Aorta (tissue), 5 donors: ENCODE measurements at regions of chr3 and their contacts with region 1.

Region 1: GRCh38 chr3:71771126-71771525 is 13.8 kb downstream of the PROK2 start:
- DNase-seq: no peak
- ATAC-seq: no peak
- H3K4me3 ChIP-seq: no peak overlapping the region
- H3K27ac ChIP-seq: no peak overlapping the region
- H3K4me1 ChIP-seq: no peaks in the 10 kb centered on the region
- H3K27me3 ChIP-seq: peaks cover 3 to 4% of the 10 kb centered on the region in 2 donors

Region 2: DNA sequence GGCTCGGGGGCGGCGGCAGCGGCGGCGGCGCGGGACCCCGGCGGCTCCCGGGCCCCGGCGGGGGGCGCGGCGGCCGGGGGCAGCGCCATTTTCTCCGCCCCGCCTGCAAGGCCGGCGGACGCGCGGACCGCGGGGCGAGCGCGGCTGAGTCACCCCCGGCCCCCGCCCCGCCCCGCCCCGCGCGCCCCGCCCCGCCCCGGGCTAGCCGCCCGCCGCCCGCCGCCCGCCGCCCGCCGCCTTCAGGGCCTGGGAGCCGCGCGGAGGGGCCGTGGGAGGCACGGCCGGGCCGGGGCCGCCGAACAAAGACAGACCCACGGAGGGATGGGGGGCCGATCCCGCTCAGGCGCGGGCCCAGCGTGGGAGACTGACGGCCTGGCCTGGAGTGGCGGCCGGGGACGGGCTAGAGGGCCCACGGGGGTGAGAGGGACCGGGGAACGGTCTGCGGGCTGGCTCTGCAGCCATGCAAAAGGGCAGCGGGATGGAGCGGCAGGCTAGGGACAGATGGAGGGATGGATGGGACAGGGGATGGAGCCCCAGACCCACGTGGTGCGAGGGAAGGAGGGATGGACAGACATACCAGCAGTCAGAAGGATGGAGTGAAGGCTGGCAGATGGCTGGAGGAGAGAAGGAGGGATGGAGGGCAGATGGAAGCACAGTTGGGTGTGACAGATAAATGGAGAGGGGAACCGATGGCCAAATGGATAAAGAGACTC is 45.7 kb before region 1 on chr3 and contains the start of gene EIF4E3:
- intact Hi-C with region 1: no loop called
- DNase-seq: peak; percentile 52 to 81
- ATAC-seq: peak; percentile 50
- H3K4me3 ChIP-seq: peak within 1 kb of the TSS; percentile 93 to 97
- H3K27ac ChIP-seq: no peak within 1 kb of the TSS
- H3K4me1 ChIP-seq: no peaks in the 10 kb centered on the region
- H3K27me3 ChIP-seq: no peaks in the 10 kb centered on the region
- total RNA-seq, gene EIF4E3: 22.2 to 29.3 TPM

Region 3: DNA sequence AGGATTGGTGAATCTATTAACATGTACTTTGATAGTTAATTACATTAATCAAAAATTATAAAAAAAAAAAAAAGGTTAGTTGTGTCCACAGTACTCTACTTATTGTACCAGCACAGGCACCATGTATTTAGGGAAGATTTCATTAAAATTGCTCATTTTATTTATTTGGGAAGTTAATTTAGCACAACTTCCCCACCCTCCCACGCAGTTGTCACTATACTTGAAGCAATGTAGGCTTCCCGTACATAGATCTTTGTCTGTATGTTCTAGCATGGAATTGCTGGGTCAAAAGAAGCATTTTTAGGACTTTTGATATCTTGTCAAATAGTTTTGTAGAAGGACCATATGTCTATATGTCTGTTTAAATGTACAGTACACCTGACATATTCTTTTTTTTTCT is 13.0 kb before region 1 on chr3:
- intact Hi-C with region 1: loop called in 1 of 2 experiments (anchors 1 kb)
- DNase-seq: no peak
- ATAC-seq: no peak
- H3K4me3 ChIP-seq: no peak overlapping the region
- H3K27ac ChIP-seq: no peak overlapping the region
- H3K4me1 ChIP-seq: no peaks in the 10 kb centered on the region
- H3K27me3 ChIP-seq: no peaks in the 10 kb centered on the region